ENCODE measurements at regions of chr18 and their contacts with region 1.

Region 1: GRCh38 chr18:55096261-55096951 is 137.1 kb upstream of the CCDC68 start:
- DNase-seq: peak; percentile 50 to 56
- H3K4me3 ChIP-seq: no peak overlapping the region
- H3K4me3 Mint-ChIP-seq: no peak overlapping the region
- H3K27ac Mint-ChIP-seq: peak overlapping the region; percentile 92
- H3K4me1 ChIP-seq: peaks cover 66% of the 10 kb centered on the region
- H3K4me1 Mint-ChIP-seq: peaks cover 42% of the 10 kb centered on the region
- H3K27me3 ChIP-seq: no peaks in the 10 kb centered on the region
- H3K27me3 Mint-ChIP-seq: no peaks in the 10 kb centered on the region
- CTCF ChIP-seq: peak in 1 of 2 experiments; percentile 10

Region 2: GRCh38 chr18:54787616-54788015 is 308.8 kb before region 1 on chr18:
- CTCF ChIA-PET with region 1: no interaction called
- POLR2A ChIA-PET with region 1: no interaction called
- intact Hi-C with region 1: no loop called
- DNase-seq: no peak
- H3K4me3 ChIP-seq: no peak overlapping the region
- H3K4me3 Mint-ChIP-seq: no peak overlapping the region
- H3K27ac Mint-ChIP-seq: no peak overlapping the region
- H3K4me1 ChIP-seq: no peaks in the 10 kb centered on the region
- H3K4me1 Mint-ChIP-seq: no peaks in the 10 kb centered on the region
- H3K27me3 ChIP-seq: no peaks in the 10 kb centered on the region
- H3K27me3 Mint-ChIP-seq: no peaks in the 10 kb centered on the region
- CTCF ChIP-seq: no peak

Region 3: DNA sequence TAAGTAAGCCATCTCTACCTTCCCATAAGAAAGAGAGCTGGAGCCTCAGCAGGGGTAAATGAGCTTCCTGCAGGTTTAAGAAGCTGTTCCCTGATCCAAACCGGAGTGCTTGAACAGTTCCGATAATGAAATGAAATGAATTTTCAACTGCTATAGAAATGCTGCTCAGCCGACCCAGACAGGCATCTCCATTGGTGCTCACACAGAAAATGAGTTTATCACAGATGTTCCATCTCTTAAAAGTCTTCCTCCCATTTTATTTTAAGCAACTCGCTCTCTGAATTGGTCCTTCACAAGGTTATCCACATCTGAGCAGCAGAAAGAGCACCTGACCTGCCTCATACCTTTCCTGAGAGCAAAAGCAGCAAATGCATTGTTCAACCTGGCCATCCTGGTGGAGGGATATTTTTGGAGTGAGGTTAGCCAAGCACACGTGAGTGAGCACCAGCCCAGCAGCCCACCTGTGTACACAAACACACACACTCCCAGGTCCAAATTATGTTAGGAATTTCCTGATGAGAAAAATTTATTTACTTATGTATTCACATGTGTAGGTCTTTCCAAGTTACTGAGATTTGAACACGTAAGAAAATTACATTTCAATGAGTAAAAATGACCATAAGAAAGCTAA is 94.9 kb before region 1 on chr18:
- CTCF ChIA-PET with region 1: no interaction called
- POLR2A ChIA-PET with region 1: no interaction called
- intact Hi-C with region 1: loop called (anchors 5 kb)
- DNase-seq: peak; percentile 64 to 76
- H3K4me3 ChIP-seq: no peak overlapping the region
- H3K4me3 Mint-ChIP-seq: peak overlapping the region; percentile 68
- H3K27ac Mint-ChIP-seq: peak overlapping the region; percentile 83
- H3K4me1 ChIP-seq: peaks cover 17% of the 10 kb centered on the region
- H3K4me1 Mint-ChIP-seq: peaks cover 6% of the 10 kb centered on the region
- H3K27me3 ChIP-seq: no peaks in the 10 kb centered on the region
- H3K27me3 Mint-ChIP-seq: no peaks in the 10 kb centered on the region
- CTCF ChIP-seq: no peak

Region 4: DNA sequence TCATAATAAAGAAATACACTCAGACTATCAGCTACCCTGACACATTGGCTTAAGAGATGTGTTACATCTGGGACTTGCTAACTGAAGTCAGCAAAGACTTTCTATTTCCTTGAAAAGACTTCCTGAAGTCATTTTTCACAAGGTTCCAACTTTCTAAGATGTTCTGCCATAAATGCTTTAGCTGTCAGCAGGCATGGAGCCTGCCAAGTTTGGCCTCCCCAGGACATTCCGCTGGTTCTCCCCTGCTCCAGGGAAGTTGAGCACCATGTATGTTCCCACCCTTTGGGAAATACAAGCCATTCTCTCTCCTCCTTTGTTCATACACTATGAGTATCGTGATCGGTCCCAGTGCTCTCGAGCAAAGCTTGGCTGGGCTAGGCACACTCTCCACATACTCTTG is 65.5 kb after region 1 on chr18:
- CTCF ChIA-PET with region 1: interaction called, 3 read pairs
- POLR2A ChIA-PET with region 1: no interaction called
- intact Hi-C with region 1: loop called (anchors 1 kb)
- DNase-seq: no peak
- H3K4me3 ChIP-seq: no peak overlapping the region
- H3K4me3 Mint-ChIP-seq: no peak overlapping the region
- H3K27ac Mint-ChIP-seq: peak overlapping the region; percentile 29
- H3K4me1 ChIP-seq: peaks cover 50% of the 10 kb centered on the region
- H3K4me1 Mint-ChIP-seq: peaks cover 21% of the 10 kb centered on the region
- H3K27me3 ChIP-seq: no peaks in the 10 kb centered on the region
- H3K27me3 Mint-ChIP-seq: no peaks in the 10 kb centered on the region
- CTCF ChIP-seq: no peak

Region 5: GRCh38 chr18:55264108-55264507 is 167.7 kb after region 1 on chr18:
- CTCF ChIA-PET with region 1: no interaction called
- POLR2A ChIA-PET with region 1: no interaction called
- intact Hi-C with region 1: loop called (anchors 1 kb)
- DNase-seq: peak; percentile 49 to 50
- H3K4me3 ChIP-seq: no peak overlapping the region
- H3K4me3 Mint-ChIP-seq: no peak overlapping the region
- H3K27ac Mint-ChIP-seq: peak overlapping the region; percentile 48
- H3K4me1 ChIP-seq: peaks cover 66% of the 10 kb centered on the region
- H3K4me1 Mint-ChIP-seq: peaks cover 8% of the 10 kb centered on the region
- H3K27me3 ChIP-seq: no peaks in the 10 kb centered on the region
- H3K27me3 Mint-ChIP-seq: no peaks in the 10 kb centered on the region
- CTCF ChIP-seq: no peak